KBM-7 (cell line): ENCODE measurements at regions of chr2 and their contacts with region 1.

Region 1: DNA sequence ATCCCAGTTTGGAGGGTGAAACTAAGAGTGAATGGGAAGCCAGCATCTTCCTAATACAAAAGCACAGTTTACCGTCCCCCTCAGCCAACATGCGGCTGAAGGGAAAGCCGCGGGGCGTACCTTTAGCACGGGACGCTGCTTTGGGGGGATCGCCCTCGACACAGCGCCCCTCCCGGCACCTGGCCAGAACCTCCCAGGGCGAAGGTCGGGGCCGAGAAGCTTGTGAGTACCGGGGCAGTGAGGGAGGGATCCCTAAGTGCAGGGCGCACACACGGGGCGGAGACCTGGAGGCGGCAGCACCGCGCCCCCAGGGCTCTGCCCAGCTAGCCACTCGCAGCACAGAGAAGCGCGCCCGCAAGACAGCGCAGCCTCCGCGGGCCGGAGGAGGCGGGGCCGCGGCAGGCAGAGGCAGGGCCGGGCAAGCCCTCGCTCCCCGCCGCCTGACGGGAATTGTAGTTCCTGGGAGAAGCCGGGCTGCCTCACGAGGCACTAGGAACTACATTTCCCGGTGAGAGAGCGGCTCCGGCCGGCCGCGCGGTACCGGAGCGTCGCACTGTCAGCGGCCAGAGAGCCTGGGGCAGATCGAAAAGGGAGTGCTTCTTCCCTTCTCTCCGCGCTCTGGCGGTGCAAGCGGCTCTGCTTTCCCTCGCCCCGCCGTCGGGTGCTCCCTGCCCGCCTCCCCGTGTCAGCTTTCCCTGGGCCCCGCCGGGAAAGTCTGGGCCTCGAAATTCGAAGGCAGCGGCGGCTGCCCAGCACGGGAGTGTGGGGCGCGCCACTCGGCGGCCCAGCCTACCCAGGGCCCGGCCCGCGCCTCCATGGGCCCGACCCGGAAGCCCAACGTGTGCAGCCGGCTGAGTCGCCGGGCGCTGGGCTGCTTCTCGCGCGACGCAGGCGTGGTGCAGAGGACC is at the starts of genes DCAF17 and METTL8:
- DNase-seq: peak; percentile 99

Region 2: GRCh38 chr2:170973492-170974303 is 460.3 kb before region 1 on chr2:
- in situ Hi-C with region 1: loop called (anchors 25 kb)
- DNase-seq: peak; percentile 91

Region 3: GRCh38 chr2:171072164-171072563 is 361.9 kb before region 1 on chr2:
- in situ Hi-C with region 1: no loop called
- DNase-seq: no peak